CD14-positive monocyte (primary cell): ENCODE measurements at regions of chr9 and their contacts with region 1.

Region 1: GRCh38 chr9:83334320-83334719 is 203.9 kb downstream of the FRMD3 start:
- DNase-seq: peak; percentile 71 to 78 (median 76)
- H3K4me3 ChIP-seq: no peak overlapping the region
- H3K4me3 Mint-ChIP-seq: no peak overlapping the region
- H3K27ac ChIP-seq: no peak overlapping the region
- H3K27ac Mint-ChIP-seq: no peak overlapping the region
- H3K4me1 ChIP-seq: no peaks in the 10 kb centered on the region
- H3K4me1 Mint-ChIP-seq: peaks cover 6% of the 10 kb centered on the region
- H3K27me3 ChIP-seq: no peaks in the 10 kb centered on the region
- H3K27me3 Mint-ChIP-seq: no peaks in the 10 kb centered on the region
- CTCF ChIP-seq: peak; percentile 95

Region 2: GRCh38 chr9:82777366-82777765 is 557.0 kb before region 1 on chr9:
- intact Hi-C with region 1: no loop called
- DNase-seq: no peak
- H3K4me3 ChIP-seq: no peak overlapping the region
- H3K4me3 Mint-ChIP-seq: no peak overlapping the region
- H3K27ac ChIP-seq: no peak overlapping the region
- H3K27ac Mint-ChIP-seq: no peak overlapping the region
- H3K4me1 ChIP-seq: no peaks in the 10 kb centered on the region
- H3K4me1 Mint-ChIP-seq: no peaks in the 10 kb centered on the region
- H3K27me3 ChIP-seq: no peaks in the 10 kb centered on the region
- H3K27me3 Mint-ChIP-seq: no peaks in the 10 kb centered on the region
- CTCF ChIP-seq: no peak

Region 3: DNA sequence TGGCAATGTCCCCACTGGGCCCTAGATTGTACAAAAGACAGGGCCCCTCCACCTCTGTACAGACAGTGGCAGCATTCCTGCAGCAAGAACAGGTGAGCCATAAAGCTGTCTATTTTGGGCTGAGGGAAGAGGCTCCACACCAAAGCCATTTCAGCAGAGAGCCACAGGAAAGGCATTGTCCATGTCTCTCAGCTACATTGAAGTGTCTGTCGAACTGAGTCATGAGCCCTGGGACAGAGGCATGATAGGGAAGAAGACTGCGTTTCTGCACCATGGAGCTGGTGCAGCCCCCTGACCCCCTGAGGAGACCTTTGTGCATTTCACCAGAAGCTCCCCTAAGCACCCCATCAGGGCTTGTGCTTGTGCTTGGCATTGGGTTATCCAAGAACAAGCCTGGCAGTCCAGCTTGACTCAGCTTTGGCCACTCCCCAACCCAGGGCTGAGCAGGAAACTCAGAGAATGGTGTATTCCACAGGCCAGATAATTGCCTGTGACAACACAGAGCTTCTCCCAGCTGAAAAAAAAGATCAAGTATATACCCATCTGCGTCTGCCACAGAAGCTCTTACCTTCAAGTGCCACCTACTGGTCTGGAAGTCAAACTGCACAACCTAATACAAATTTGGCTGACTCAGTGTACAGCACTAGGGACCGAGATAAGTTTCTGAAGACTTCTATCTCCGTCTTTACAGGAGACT is 209.8 kb after region 1 on chr9:
- intact Hi-C with region 1: loop called (anchors 2 to 5 kb)
- DNase-seq: peak; percentile 48 to 67 (median 63)
- H3K4me3 ChIP-seq: no peak overlapping the region
- H3K4me3 Mint-ChIP-seq: no peak overlapping the region
- H3K27ac ChIP-seq: no peak overlapping the region
- H3K27ac Mint-ChIP-seq: peak overlapping the region in 1 of 7 donors; percentile 41
- H3K4me1 ChIP-seq: peaks cover 1 to 2% of the 10 kb centered on the region in 2 donors
- H3K4me1 Mint-ChIP-seq: peaks cover under 1% of the 10 kb centered on the region
- H3K27me3 ChIP-seq: no peaks in the 10 kb centered on the region
- H3K27me3 Mint-ChIP-seq: peaks cover 4 to 8% (median 5%) of the 10 kb centered on the region in 3 donors
- CTCF ChIP-seq: peak; percentile 81

Region 4: GRCh38 chr9:83649080-83649479 is 314.8 kb after region 1 on chr9:
- intact Hi-C with region 1: loop called (anchors 10 kb)
- DNase-seq: peak; percentile 43 to 59 (median 44)
- H3K4me3 ChIP-seq: no peak overlapping the region
- H3K4me3 Mint-ChIP-seq: no peak overlapping the region
- H3K27ac ChIP-seq: no peak overlapping the region
- H3K27ac Mint-ChIP-seq: peak overlapping the region in 2 of 7 donors; percentile 58 to 74
- H3K4me1 ChIP-seq: no peaks in the 10 kb centered on the region
- H3K4me1 Mint-ChIP-seq: peaks cover 4% of the 10 kb centered on the region
- H3K27me3 ChIP-seq: no peaks in the 10 kb centered on the region
- H3K27me3 Mint-ChIP-seq: peaks cover 0 to 2% (median 0%) of the 10 kb centered on the region in 3 donors
- CTCF ChIP-seq: peak; percentile 70

Region 5: GRCh38 chr9:83920927-83921707 is 586.8 kb after region 1 on chr9 and contains the start of gene KIF27:
- intact Hi-C with region 1: loop called in 1 of 2 experiments (anchors 10 kb)
- DNase-seq: peak; percentile 96 to 99 (median 98)
- H3K4me3 ChIP-seq: peak within 1 kb of the TSS; percentile 44 to 74 (median 60)
- H3K4me3 Mint-ChIP-seq: peak within 1 kb of the TSS; percentile 83 to 89
- H3K27ac ChIP-seq: peak within 1 kb of the TSS; percentile 77 to 85
- H3K27ac Mint-ChIP-seq: peak within 1 kb of the TSS; percentile 92 to 97 (median 95)
- H3K4me1 ChIP-seq: peaks cover 15 to 20% of the 10 kb centered on the region in 2 donors
- H3K4me1 Mint-ChIP-seq: peaks cover 12% of the 10 kb centered on the region
- H3K27me3 ChIP-seq: no peaks in the 10 kb centered on the region
- H3K27me3 Mint-ChIP-seq: peaks cover 0 to 4% (median 0%) of the 10 kb centered on the region in 3 donors
- CTCF ChIP-seq: peak; percentile 72
- polyA plus RNA-seq, gene KIF27: 0.58 to 1.3 (median 1.1) TPM